ENCODE measurements at regions of chr19 and their contacts with region 1.

Region 1: GRCh38 chr19:52258426-52258825 is 11.0 kb upstream of the ZNF766 start:
- DNase-seq: no peak
- ATAC-seq: no peak
- H3K4me3 ChIP-seq: no peak overlapping the region
- H3K27ac ChIP-seq: no peak overlapping the region
- H3K4me1 ChIP-seq: no peaks in the 10 kb centered on the region
- H3K27me3 ChIP-seq: no peaks in the 10 kb centered on the region
- CTCF ChIP-seq: no peak

Region 2: GRCh38 chr19:52139252-52140031 is 119.0 kb before region 1 on chr19 and contains the start of gene ZNF616:
- CTCF ChIA-PET with region 1: no interaction called
- POLR2A ChIA-PET with region 1: interaction called, 10 read pairs
- in situ Hi-C with region 1: no loop called
- intact Hi-C with region 1: no loop called
- DNase-seq: peak; percentile 33
- ATAC-seq: peak; percentile 96
- H3K4me3 ChIP-seq: peak within 1 kb of the TSS; percentile 95 to 99
- H3K27ac ChIP-seq: peak within 1 kb of the TSS; percentile 90
- H3K4me1 ChIP-seq: no peaks in the 10 kb centered on the region; the same call in 1 of the 2 replicates
- H3K27me3 ChIP-seq: no peaks in the 10 kb centered on the region
- CTCF ChIP-seq: peak; percentile 89
- total RNA-seq, gene ZNF616: 5.3 TPM

Region 3: DNA sequence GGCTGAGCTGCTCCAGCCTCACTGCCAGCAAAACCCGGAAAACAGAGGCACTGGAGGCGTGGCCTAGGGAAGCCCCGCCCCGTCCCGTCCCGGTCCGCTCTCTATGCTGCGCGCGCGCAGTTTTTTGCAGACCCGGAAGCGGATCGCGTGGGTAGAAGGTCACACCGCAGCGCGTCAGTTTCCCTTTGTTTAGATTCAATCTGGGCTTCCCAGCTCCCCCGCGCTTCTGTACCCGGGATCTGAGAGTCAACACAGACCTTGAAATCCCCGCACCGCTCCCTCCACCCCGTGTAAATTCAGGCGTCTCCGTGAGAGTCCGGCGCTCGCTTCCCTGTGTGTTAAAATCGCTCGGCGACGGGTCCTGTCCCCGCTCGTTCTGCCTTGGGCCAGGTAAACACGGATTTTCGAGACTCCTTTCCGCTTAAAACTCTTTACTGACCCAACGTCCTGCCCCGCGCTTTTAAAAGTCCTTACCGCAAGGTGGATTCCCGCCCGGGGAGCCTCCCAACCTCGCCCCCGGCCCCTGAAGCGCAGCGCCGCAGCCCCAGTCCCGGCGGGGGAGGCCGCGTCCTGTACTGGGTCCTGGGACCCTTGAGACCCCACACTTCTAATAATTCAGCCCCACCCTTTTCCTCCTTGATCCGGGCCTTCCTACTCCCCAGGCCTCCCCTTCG is 77.8 kb after region 1 on chr19 and contains the start of gene ZNF610:
- CTCF ChIA-PET with region 1: interaction called, 12 read pairs
- POLR2A ChIA-PET with region 1: no interaction called
- in situ Hi-C with region 1: no loop called
- intact Hi-C with region 1: no loop called
- DNase-seq: no peak
- ATAC-seq: no peak
- H3K4me3 ChIP-seq: peak within 1 kb of the TSS in 1 of 2 experiments; percentile 39; a peak in 1 of 4 replicates
- H3K27ac ChIP-seq: no peak within 1 kb of the TSS
- H3K4me1 ChIP-seq: no peaks in the 10 kb centered on the region
- H3K27me3 ChIP-seq: no peaks in the 10 kb centered on the region
- CTCF ChIP-seq: no peak
- total RNA-seq, gene ZNF610: not detected

Region 4: DNA sequence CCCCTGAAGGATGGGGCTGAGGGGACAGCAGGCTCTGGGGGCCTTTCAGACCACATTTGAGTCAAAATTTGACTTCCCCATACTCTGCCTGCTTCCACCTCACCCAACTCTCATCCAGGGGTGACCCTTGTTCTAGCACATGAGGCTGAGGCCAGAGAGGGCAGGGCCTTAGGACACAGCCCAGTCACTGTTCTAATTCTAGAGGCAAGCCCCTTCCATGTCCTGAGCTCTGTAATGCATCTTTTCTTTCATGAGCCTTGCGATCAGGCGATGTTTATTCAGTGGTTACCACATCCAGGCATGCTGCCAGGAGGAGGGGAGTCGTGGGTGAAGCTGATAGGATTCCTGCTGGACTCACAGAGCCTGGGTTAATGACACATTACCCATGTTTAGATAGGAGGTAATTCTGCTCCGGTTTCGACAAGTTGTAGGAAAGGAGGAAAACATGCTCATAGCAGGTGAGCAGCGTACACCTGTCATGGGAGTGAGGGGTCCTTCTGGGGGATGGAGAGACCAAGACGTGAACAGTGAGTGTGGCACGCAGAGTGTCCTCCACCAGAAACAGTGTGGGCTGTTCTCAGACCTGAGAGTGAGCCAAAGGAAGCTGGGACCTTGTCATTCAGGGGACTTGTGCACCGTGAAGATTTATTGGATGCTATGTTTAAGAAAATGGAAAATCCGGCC is 1951.5 kb after region 1 on chr19:
- CTCF ChIA-PET with region 1: no interaction called
- POLR2A ChIA-PET with region 1: interaction called, 13 read pairs
- in situ Hi-C with region 1: no loop called
- intact Hi-C with region 1: no loop called
- DNase-seq: peak; percentile 96
- ATAC-seq: peak; percentile 81
- H3K4me3 ChIP-seq: 0 out of 4 replicates have a peak overlapping the region, but pooled peaks of 1 of the 2 experiments have one; percentile 5
- H3K27ac ChIP-seq: peak overlapping the region; percentile 64
- H3K4me1 ChIP-seq: peaks cover 60% of the 10 kb centered on the region
- H3K27me3 ChIP-seq: no peaks in the 10 kb centered on the region
- CTCF ChIP-seq: no peak

Measured in Panc1 (cell line).